WTC11 (cell line): ENCODE measurements at regions of chr17 and their contacts with region 1.

Region 1: DNA sequence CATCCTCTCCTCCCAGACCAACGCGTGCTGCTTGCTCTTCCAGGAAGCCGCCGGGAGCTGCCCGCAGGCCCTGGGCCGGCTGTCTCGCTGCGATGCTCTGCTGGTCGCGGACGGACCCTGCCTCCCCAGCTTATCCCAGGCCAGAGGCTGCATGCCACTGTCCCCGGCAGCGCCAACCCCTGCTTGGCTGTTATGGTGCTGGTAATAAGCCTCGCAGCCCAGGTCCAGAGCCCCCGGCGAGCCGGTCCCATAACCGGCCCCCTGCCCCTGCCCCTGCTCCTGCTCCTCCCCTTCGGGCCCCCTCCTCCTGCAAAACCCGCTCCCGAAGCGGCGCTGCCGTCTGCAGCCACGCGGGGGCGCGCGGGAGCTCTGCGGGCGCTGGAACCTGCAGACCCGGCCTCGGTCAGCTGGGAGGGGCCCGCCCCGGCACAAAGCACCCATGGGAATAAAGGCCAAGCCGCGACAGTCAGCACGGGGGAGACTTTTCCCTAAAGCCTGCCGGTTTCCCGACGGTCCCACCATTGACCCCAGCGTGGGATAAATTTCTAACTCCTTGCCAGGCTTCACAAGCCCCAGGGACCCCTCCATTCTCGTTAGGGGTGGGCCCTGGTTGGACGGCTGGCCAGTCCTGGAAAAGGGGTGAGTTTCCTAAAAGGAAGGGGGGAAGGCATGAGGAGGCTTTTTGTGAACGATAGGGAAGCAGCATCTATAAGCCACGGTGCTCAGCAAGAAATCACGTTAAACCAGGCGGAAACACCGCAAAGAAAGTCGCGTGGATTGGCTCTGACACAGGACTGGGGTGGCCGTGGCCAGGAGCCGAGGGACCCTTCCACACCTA is 11.2 kb downstream of the ENPP7 start:
- DNase-seq: peak; percentile 95
- ATAC-seq: peak; percentile 80
- H3K4me3 Mint-ChIP-seq: peak overlapping the region; percentile 53
- H3K27ac Mint-ChIP-seq: no peak overlapping the region
- H3K4me1 Mint-ChIP-seq: peaks cover 7% of the 10 kb centered on the region
- H3K27me3 Mint-ChIP-seq: peaks cover 68% of the 10 kb centered on the region
- CTCF ChIP-seq: peak; percentile 92

Region 2: GRCh38 chr17:79517827-79518584 is 224.0 kb before region 1 on chr17:
- CTCF ChIA-PET with region 1: no interaction called
- POLR2A ChIA-PET with region 1: no interaction called
- DNase-seq: no peak
- ATAC-seq: no peak
- H3K4me3 Mint-ChIP-seq: no peak overlapping the region
- H3K27ac Mint-ChIP-seq: no peak overlapping the region
- H3K4me1 Mint-ChIP-seq: peaks cover 12% of the 10 kb centered on the region
- H3K27me3 Mint-ChIP-seq: peaks cover 4% of the 10 kb centered on the region; the same call in 1 of the 2 replicates
- CTCF ChIP-seq: no peak

Region 3: GRCh38 chr17:79619196-79619595 is 122.8 kb before region 1 on chr17:
- CTCF ChIA-PET with region 1: no interaction called
- POLR2A ChIA-PET with region 1: no interaction called
- DNase-seq: peak; percentile 8
- ATAC-seq: no peak
- H3K4me3 Mint-ChIP-seq: no peak overlapping the region
- H3K27ac Mint-ChIP-seq: no peak overlapping the region
- H3K4me1 Mint-ChIP-seq: peaks cover 19% of the 10 kb centered on the region
- H3K27me3 Mint-ChIP-seq: peaks cover 8% of the 10 kb centered on the region
- CTCF ChIP-seq: no peak

Region 4: GRCh38 chr17:79728226-79728907 is 13.6 kb before region 1 on chr17:
- CTCF ChIA-PET with region 1: interaction called, 65 read pairs
- POLR2A ChIA-PET with region 1: no interaction called
- DNase-seq: peak; percentile 84
- ATAC-seq: peak; percentile 77
- H3K4me3 Mint-ChIP-seq: peak overlapping the region; percentile 33
- H3K27ac Mint-ChIP-seq: no peak overlapping the region
- H3K4me1 Mint-ChIP-seq: 0 out of 2 replicates have a peak, but pooled peaks cover 6% of the 10 kb centered on the region
- H3K27me3 Mint-ChIP-seq: no peaks in the 10 kb centered on the region; the same call in 1 of the 2 replicates
- CTCF ChIP-seq: no peak

Region 5: GRCh38 chr17:79789534-79790353 is 47.8 kb after region 1 on chr17:
- CTCF ChIA-PET with region 1: interaction called, 165 read pairs
- POLR2A ChIA-PET with region 1: interaction called, 16 read pairs
- DNase-seq: peak; percentile 82
- ATAC-seq: peak; percentile 50
- H3K4me3 Mint-ChIP-seq: peak overlapping the region; percentile 65
- H3K27ac Mint-ChIP-seq: no peak overlapping the region
- H3K4me1 Mint-ChIP-seq: peaks cover 48% of the 10 kb centered on the region
- H3K27me3 Mint-ChIP-seq: peaks cover 83% of the 10 kb centered on the region
- CTCF ChIP-seq: peak; percentile 65

Region 6: DNA sequence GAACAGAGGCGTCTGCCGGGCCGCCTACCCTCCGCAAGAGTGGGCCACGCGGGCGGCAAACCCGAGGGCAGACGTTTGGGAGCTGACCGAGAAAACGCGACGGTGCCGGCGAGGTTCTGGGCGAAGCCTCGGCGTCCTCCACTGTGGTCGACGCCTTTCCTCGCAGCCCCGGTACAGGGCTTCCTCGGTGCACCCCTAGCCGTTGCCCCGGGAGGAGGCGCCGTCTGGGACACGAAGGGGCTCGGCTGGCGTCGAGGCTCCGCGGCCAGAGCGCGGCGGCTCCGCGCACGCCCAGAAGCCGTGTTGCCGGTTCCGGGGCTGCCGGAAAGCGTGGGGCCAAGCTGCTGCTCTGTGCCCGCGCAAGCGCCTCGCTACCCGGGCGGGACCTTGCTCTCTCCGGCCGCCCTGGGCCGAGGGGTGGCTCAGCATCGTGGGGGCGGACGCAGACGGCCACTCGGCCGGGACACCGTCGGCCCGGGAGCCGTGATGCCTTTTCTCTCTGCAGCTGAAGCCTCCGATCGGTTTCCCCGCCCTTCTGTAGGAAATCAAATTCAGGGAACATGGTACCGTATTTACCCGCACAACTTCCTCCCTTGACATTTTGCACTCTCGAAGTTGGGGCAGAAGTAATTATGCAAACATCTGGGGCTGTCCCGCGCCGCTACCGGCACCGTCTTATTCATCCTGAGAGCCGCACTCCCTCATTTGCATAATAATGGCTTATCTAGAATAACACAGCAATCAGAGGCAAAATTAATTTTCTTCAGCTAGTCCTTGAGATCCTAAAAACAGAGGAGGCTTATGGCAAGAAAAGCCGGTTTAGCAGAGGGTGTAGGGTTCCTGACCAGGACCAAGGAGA is 62.3 kb after region 1 on chr17:
- CTCF ChIA-PET with region 1: interaction called, 30 read pairs
- POLR2A ChIA-PET with region 1: interaction called, 5 read pairs
- DNase-seq: peak; percentile 50
- ATAC-seq: no peak; the same call in 1 of the 2 replicates
- H3K4me3 Mint-ChIP-seq: peak overlapping the region; percentile 53
- H3K27ac Mint-ChIP-seq: no peak overlapping the region
- H3K4me1 Mint-ChIP-seq: peaks cover 62% of the 10 kb centered on the region
- H3K27me3 Mint-ChIP-seq: peaks cover 100% of the 10 kb centered on the region
- CTCF ChIP-seq: no peak

Region 7: GRCh38 chr17:79915850-79916430 is 174.0 kb after region 1 on chr17:
- CTCF ChIA-PET with region 1: interaction called, 11 read pairs
- POLR2A ChIA-PET with region 1: no interaction called
- DNase-seq: peak; percentile 72
- ATAC-seq: peak; percentile 76
- H3K4me3 Mint-ChIP-seq: no peak overlapping the region
- H3K27ac Mint-ChIP-seq: no peak overlapping the region
- H3K4me1 Mint-ChIP-seq: peaks cover 4% of the 10 kb centered on the region; the same call in 1 of the 2 replicates
- H3K27me3 Mint-ChIP-seq: no peaks in the 10 kb centered on the region
- CTCF ChIP-seq: no peak